Left colon (tissue), 2 donors: ENCODE measurements at regions of chr2 and their contacts with region 1.

Region 1: GRCh38 chr2:46650556-46651001 is 171.2 kb downstream of the TMEM247 start:
- DNase-seq: peak; percentile 63 to 70
- ATAC-seq: peak; percentile 80

Region 2: DNA sequence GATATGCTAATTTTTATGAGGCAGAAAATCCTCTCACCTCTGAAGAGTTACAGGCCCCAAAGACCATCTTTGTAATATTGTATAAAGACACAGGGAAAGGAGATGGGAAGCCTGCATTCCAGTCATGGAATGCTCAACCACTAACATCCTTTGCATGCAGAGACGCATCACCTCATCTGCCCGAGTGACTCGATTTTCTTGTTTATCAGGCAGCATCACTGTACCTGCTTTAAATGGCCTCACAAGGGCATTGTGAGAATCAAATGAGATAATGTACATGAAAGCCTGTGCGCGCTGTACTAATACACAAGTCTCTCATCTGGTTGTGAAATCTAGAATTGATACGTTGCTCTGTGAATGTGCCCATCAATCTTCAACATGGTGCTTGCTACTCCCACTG is 181.5 kb before region 1 on chr2:
- intact Hi-C with region 1: loop called in 1 of 2 experiments (anchors 5 kb)
- DNase-seq: no peak
- ATAC-seq: no peak

Region 3: DNA sequence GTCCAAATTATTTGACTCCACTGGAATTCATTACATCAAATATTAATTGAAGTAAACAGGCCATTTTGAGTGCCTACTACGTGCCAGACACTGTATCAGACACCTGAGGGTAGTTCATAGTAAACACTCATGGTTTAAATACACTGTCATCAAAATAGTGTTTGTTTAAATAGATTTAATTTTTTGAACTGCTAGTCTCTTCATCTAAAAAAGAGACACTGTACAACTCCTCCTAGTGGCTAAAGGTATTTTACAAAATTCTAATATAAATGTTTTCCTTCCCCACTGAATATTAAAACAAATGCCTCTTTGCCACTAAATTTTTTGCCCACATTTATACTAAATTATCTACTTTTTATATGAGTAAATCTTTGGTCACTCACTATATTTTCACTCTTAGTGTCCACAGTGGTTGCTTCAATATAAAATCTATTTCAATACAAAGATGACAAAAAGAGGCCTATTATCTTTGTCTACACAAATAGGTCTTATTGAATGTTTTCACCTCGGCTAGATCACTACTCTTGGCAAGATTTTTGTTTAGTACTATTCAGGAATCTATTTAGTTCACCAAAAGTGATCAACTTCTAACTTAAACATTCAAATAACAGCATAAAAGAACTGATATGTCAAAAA is 49.1 kb before region 1 on chr2:
- intact Hi-C with region 1: no loop called
- DNase-seq: no peak
- ATAC-seq: no peak

Region 4: GRCh38 chr2:46699934-46700256 is 49.3 kb after region 1 on chr2:
- intact Hi-C with region 1: no loop called
- DNase-seq: no peak
- ATAC-seq: no peak

Region 5: DNA sequence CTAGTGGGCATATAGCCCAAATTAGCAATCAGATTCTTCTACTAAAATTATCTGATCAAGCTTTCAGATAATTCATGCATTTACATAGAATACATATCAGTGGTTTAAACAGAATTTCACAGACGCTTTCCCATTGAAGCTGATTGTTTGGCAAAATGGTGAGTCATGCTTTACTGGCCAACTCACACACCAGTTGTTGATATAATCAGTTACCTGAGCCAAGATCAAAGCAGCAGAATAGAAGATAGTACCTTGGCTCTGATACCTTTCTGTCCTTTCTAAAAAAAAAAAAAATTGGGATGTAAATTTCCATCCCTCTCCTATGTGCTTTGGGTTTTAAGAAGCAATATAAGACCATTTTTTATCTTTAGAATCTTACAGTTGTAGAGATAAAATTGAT is 87.0 kb after region 1 on chr2:
- intact Hi-C with region 1: no loop called
- DNase-seq: no peak
- ATAC-seq: peak; percentile 77

Region 6: DNA sequence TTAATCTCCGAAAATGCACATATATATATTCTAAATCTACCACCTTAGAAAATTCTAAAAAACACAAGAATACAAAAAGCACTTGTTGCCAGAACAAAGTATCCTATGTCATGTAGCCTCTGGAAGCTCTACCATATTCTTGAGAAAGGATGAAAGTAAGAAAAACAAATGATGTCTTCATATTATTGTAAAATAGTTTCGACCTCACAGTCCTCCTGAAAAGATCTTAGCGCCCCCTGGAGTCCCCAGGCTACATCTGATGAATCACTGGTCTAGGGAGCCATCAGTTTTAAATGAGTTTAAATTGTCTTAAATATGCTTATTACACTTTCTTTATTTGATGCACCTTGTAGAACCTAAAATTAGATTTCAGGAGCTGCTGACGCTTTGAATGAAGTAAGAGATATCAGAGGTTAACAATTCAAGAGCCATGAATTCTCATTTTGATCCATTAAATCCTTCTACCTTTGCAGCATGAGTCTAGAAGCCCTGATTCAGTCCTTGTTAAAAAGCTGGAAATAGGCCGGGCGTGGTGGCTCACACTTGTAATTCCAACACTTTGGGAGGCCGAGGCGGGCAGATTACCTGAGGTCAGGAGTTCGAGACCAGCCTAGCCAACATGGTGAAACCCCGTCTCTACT is 126.2 kb after region 1 on chr2:
- intact Hi-C with region 1: loop called in 1 of 2 experiments (anchors 10 kb)
- DNase-seq: peak in 1 of 2 donors; percentile 74
- ATAC-seq: peak; percentile 58

Region 7: DNA sequence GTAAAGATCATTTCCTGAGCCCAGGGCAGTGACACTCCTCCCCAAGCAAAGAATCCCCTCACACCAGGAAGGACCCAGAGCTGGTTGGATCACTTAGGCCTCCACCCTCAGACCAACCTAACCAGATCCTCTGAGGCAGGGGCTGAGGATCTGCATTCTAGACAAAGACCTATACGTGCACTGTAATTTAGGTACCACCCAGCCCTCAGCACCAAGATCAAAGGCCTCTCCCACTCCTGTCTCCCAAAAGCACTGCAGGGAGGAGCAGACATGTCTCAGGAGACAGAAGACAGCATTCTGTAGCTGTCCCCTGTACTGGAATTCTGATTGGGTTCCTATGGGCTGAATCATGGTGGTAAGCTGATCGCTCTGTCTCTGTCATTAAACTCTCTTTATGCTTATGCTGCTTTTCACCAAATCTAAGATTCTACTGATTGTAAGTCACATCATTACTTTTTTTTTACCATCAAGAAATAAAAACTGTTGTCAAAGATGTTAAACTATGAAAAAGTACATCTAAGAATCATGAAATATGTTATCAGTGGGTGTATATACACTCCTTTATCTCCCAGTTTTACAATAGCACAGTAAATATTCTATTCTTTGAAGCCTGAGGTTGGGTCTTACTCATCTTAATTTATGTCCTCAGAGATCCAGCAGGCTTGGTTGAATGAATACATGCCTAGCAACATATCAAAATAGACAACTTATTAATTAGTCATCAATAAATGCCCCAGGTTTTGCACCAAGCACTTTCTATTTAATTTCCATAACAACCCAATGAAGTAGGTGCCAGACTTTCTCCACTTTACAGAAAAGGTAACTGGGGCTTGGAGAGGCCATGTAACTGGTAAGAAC is 236.7 kb after region 1 on chr2:
- intact Hi-C with region 1: loop called in 1 of 2 experiments (anchors 5 kb)
- DNase-seq: no peak
- ATAC-seq: no peak